Posterior cingulate gyrus (tissue), 11 donors: ENCODE measurements at regions of chr2 and their contacts with region 1.

Region 1: DNA sequence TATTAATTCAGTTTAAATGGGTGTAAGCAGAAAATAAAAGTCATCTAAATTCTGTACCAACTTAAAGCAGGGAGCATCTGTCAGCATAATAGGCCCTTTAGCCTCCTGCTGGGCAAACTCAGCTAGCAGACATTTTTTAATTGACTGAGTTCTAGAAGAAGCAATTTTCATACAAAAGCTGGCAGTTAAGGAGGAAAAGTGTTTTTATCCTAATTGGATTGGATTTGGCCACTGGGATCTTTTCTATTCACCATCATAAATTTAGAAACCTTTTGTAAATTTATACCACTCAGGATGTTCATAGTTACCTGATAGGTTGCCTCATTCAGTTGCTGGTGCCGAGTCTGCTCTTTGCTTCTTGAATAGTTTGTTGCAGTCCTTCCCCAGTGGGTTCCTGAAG is 262.7 kb upstream of the FSIP2 start:
- DNase-seq: no peak

Region 2: DNA sequence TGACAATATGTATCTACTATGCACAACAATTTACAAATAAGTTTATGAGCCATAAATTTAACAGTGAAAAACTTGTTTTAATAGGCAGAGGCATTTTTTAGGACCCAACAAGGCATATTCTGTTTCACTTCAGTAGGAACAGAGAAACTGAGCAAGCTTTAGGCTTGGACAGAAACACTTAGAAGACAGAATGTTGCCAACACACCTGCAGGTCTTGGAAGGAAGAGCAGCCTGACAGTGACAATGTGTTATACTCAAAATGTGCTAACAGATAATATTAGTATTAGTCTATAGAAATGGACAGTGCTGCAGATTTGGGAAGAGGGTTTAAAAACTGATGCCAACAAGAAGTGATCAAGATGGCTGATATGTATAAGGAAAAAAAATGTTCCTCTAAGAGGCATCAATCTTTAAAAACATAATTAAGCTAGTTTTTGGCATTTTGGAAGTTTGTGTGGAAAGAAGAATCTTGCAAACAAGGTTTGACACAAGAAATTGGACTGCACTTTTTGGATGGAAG is 34.4 kb before region 1 on chr2:
- intact Hi-C with region 1: loop called (anchors 1 kb)
- DNase-seq: no peak